ENCODE measurements at regions of chr15 and their contacts with region 1.

Region 1: DNA sequence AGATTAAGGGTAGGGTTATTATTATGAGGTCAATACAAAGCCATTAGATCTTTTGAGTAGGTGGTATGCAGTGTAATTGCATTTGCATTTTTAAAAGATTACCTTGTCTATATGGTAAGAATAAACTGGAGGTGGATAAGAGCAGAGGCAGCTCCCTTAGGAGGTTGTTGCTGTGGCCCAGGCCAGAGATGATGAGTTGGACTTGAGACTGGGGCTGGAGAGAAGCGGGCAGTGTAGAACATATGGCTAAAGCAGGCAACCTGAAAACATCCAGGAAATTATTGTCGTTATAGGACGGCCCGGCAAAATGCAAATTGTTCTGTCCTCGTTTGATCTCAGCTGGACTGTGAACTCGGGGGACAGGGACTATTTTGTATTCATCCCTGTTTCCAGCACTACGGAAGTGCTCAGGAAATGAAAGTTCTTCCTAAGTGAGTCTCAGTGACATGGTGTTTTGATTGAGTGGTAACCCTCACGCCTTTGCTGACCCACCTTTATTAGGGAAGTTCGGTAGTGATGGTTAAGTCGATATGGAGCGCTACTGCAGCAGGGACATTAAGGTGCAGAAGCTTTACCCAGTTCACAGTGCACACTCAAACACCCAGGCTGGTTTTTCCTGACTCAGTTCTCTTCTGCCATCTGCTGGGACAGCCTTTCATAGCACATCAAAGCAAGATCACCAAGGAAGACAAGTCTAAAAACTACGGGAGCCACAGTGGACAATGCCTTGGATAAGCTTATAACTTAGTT is 27.2 kb upstream of the VPS33B start:
- DNase-seq: peak; percentile 64
- H3K4me3 ChIP-seq: peak overlapping the region in 1 of 2 experiments; percentile 11; a peak in 1 of 4 replicates
- H3K27ac ChIP-seq: no peak overlapping the region
- H3K4me1 ChIP-seq: peaks cover 0 to 2% of the 10 kb centered on the region in 2 experiments; a peak in 1 of 4 replicates
- H3K27me3 ChIP-seq: peaks cover 10% of the 10 kb centered on the region; the same call in 1 of the 2 replicates
- CTCF ChIP-seq: peak; percentile 74
- EP300 ChIP-seq: no peak
- RAD21 ChIP-seq: peak; percentile 93

Region 2: GRCh38 chr15:91068966-91069365 is 19.4 kb after region 1 on chr15:
- CTCF ChIA-PET with region 1: interaction called, 19 read pairs
- POLR2A ChIA-PET with region 1: no interaction called
- DNase-seq: no peak
- H3K4me3 ChIP-seq: no peak overlapping the region
- H3K27ac ChIP-seq: no peak overlapping the region
- H3K4me1 ChIP-seq: peaks cover 0 to 7% of the 10 kb centered on the region in 2 experiments; a peak in 1 of 4 replicates
- H3K27me3 ChIP-seq: no peaks in the 10 kb centered on the region
- CTCF ChIP-seq: no peak
- EP300 ChIP-seq: no peak
- RAD21 ChIP-seq: no peak

Region 3: DNA sequence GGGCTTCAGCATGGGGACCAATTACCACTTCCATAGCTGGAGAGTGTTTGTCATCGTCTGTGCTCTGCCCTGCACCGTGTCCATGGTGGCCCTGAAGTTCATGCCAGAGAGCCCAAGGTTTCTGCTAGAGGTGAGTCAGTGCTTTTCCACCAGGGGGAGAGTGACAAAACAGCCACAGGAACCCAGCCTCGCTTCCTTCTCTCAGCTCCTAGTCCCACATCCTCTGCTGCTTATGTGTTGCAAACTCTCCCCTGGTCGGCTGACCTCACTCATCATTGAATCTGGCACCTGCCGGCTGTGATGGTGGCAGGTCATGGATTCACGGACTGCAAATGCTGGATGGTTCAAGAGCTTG is 208.8 kb after region 1 on chr15:
- CTCF ChIA-PET with region 1: interaction called, 12 read pairs
- POLR2A ChIA-PET with region 1: no interaction called
- DNase-seq: no peak
- H3K4me3 ChIP-seq: no peak overlapping the region
- H3K27ac ChIP-seq: no peak overlapping the region
- H3K4me1 ChIP-seq: no peaks in the 10 kb centered on the region
- H3K27me3 ChIP-seq: no peaks in the 10 kb centered on the region; the same call in 1 of the 2 replicates
- CTCF ChIP-seq: no peak
- EP300 ChIP-seq: no peak
- RAD21 ChIP-seq: no peak

Region 4: DNA sequence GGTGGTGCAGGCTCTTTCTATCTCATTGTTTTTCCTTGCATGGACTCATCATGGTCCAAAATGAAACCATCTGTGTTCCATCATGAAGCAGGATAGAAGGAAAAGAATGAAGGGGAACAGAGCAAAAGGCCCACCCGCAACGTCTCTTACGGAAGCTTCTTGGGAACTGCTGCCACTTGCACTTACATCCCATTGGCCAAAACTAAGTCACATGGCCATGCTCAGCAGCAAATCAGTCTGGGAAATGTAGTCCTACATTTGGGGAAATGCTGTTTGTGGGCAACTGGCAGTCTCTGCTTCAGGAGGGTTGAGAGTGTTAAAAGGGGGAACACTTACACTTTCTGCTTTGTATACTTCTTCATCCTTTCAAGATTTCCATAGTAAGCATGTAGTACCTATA is 242.1 kb after region 1 on chr15:
- CTCF ChIA-PET with region 1: no interaction called
- POLR2A ChIA-PET with region 1: no interaction called
- DNase-seq: peak; percentile 34
- H3K4me3 ChIP-seq: no peak overlapping the region
- H3K27ac ChIP-seq: no peak overlapping the region
- H3K4me1 ChIP-seq: no peaks in the 10 kb centered on the region
- H3K27me3 ChIP-seq: no peaks in the 10 kb centered on the region
- CTCF ChIP-seq: no peak
- EP300 ChIP-seq: no peak
- RAD21 ChIP-seq: no peak

Region 5: GRCh38 chr15:91357011-91357410 is 307.5 kb after region 1 on chr15:
- CTCF ChIA-PET with region 1: no interaction called
- POLR2A ChIA-PET with region 1: no interaction called
- DNase-seq: no peak
- H3K4me3 ChIP-seq: no peak overlapping the region
- H3K27ac ChIP-seq: no peak overlapping the region
- H3K4me1 ChIP-seq: no peaks in the 10 kb centered on the region
- H3K27me3 ChIP-seq: no peaks in the 10 kb centered on the region
- CTCF ChIP-seq: no peak
- EP300 ChIP-seq: no peak
- RAD21 ChIP-seq: no peak

Measured in SK-N-SH (cell line).